ENCODE measurements at regions of chr7 and their contacts with region 1.

Region 1: DNA sequence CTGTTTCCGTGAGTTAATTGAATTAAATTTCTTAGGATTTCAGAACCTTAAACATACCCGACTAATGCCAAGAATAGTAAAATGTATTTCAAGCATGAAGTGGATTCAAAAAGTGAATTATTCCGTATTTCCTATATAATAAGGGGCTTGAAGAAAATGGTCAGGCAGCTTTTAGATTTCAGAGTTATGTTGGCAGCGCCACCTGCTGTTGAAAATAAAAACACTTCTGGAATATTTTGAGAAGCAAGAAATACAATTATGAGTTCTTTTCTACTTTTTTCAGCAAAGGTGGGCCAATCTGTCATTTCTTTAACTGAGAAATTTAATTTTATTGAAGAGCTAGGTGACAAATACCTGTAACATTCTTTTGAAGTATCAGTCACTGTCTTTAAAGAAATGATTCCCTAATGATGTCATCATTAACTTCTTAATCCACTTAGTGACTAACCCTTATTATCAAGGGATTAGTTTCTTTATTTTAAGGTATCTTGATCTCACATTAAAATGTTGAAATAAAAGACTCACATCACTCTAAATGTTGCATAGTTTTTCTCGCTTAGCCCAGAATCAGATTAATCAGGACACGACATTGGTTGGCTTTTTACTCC is 36.6 kb upstream of the AGR3 start:
- DNase-seq: peak in 1 of 2 donors; percentile 21
- ATAC-seq: no peak
- H3K4me3 ChIP-seq: no peak overlapping the region
- H3K27ac ChIP-seq: no peak overlapping the region
- H3K4me1 ChIP-seq: no peaks in the 10 kb centered on the region
- H3K27me3 ChIP-seq: no peaks in the 10 kb centered on the region
- CTCF ChIP-seq: peak; percentile 64 to 84 (median 76)

Region 2: DNA sequence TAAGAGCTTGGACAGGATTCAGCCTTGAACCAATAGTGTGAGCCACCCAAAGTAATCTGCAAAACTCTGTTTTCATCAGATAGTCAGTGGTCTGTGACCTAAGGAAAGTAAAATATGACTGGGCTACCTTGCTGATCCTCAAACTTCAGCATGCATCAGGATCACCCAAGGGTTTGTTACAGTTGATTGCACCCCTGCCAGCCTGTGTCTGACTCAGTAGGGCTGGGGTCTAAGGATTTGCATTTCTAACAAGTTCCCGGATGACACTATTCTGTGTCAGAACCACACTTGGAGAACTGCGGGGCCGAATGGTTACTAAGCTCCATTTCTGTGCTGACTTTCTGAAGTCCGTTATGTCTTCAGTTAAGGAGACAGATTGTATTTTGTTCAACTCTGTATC is 205.5 kb before region 1 on chr7:
- intact Hi-C with region 1: loop called in 1 of 10 experiments (anchors 5 kb)
- DNase-seq: no peak
- ATAC-seq: no peak
- H3K4me3 ChIP-seq: no peak overlapping the region
- H3K27ac ChIP-seq: no peak overlapping the region
- H3K4me1 ChIP-seq: peaks cover 0 to 6% (median 0%) of the 10 kb centered on the region in 9 donors
- H3K27me3 ChIP-seq: no peaks in the 10 kb centered on the region
- CTCF ChIP-seq: no peak

Region 3: DNA sequence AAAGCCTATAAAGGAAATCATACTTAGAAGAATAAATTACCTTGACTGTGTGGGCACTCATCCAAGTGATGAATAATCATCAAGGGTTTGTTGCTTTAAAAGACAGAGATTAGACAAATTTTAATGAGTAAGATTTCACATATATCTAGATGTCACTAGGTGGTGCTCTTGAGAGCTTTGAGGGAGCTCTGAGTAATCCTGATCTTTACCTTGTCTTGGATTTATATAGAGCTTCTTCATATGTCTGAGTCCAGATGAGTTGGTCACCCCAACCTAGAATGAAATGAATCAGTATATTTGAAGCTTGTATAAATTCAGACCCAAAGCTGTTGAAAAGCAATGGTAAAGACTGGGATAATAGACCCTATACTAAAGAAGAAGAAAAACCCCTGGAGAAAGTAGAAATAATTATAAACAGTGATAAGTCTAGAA is 117.3 kb before region 1 on chr7:
- intact Hi-C with region 1: loop called in 9 of 10 experiments (anchors 5 to 10 kb)
- DNase-seq: no peak
- ATAC-seq: no peak
- H3K4me3 ChIP-seq: no peak overlapping the region
- H3K27ac ChIP-seq: no peak overlapping the region
- H3K4me1 ChIP-seq: no peaks in the 10 kb centered on the region
- H3K27me3 ChIP-seq: no peaks in the 10 kb centered on the region
- CTCF ChIP-seq: peak in 8 of 9 donors; percentile 20 to 60 (median 50)

Region 4: GRCh38 chr7:16889851-16890415 is 28.5 kb before region 1 on chr7:
- intact Hi-C with region 1: loop called in 1 of 10 experiments (anchors 2 kb)
- DNase-seq: no peak
- ATAC-seq: no peak
- H3K4me3 ChIP-seq: no peak overlapping the region
- H3K27ac ChIP-seq: no peak overlapping the region
- H3K4me1 ChIP-seq: no peaks in the 10 kb centered on the region
- H3K27me3 ChIP-seq: no peaks in the 10 kb centered on the region
- CTCF ChIP-seq: no peak

Region 5: DNA sequence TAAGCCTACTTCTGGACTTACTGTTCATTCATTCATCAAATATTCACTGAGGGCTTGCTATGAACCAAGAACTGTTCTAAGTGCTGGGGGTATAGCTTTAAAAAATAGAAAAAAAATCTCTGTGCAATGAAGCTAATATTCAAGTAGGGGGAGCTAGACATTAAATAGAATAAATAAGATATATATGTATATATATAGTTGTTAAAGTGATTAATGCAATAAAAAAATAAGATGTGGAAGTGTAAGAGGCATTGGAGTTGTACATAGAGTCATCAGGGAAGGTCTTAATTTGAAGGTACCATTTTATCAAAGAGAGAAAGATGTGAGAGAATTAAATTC is 144.6 kb after region 1 on chr7:
- intact Hi-C with region 1: no loop called
- DNase-seq: no peak
- ATAC-seq: no peak
- H3K4me3 ChIP-seq: no peak overlapping the region
- H3K27ac ChIP-seq: peak overlapping the region in 1 of 10 donors; percentile 7
- H3K4me1 ChIP-seq: peaks cover 0 to 19% (median 0%) of the 10 kb centered on the region in 9 donors
- H3K27me3 ChIP-seq: no peaks in the 10 kb centered on the region
- CTCF ChIP-seq: peak in 4 of 9 donors; percentile 22 to 41 (median 28)